Ascending aorta (tissue), 2 donors: ENCODE measurements at regions of chr5 and their contacts with region 1.

Region 1: DNA sequence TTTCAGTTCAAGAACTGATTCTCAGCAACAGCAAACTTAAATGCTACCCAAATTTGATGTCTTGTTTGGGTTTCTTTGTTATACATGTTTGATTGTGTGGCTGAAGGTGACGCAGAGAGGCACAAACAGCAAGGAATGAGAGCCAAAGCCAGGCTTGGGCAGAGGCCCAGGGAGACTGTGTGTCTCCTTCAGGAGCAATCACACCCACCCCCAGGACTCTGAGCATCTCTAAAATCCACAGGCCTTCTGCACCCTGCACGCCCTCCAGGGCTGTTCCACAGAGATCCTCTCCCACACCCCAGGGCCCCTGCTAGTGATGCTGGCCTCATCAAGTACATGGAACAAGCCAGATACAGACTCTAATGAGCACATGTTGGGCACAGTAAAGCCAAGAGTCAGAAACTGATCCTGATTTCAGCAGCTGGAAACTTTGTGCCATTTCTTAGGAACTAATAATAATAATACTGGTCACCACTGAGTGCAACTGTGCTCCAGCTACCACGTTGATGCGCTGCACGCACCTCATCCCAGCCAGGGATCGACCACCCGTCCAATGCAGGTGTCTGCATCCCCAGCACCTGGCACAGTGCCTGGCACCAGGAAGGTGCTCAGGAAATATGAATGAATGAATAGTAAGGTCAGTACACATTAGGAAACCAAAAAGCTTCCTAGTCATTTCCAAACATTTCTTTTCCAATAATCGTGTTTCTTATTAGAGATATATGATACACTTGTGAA is 54.6 kb upstream of the TCF7 start:
- DNase-seq: no peak
- H3K4me3 ChIP-seq: no peak overlapping the region
- H3K27ac ChIP-seq: peak overlapping the region; percentile 81 to 85
- H3K4me1 ChIP-seq: peaks cover 3 to 13% of the 10 kb centered on the region in 2 donors
- H3K27me3 ChIP-seq: no peaks in the 10 kb centered on the region
- CTCF ChIP-seq: no peak

Region 2: GRCh38 chr5:134125039-134126015 is 65.4 kb after region 1 on chr5:
- intact Hi-C with region 1: loop called (anchors 5 kb)
- DNase-seq: peak; percentile 49 to 82
- H3K4me3 ChIP-seq: no peak overlapping the region
- H3K27ac ChIP-seq: peak overlapping the region; percentile 59 to 70
- H3K4me1 ChIP-seq: peaks cover 10 to 33% of the 10 kb centered on the region in 2 donors
- H3K27me3 ChIP-seq: no peaks in the 10 kb centered on the region
- CTCF ChIP-seq: no peak